HepG2 (cell line): ENCODE measurements at regions of chr16 and their contacts with region 1.

Region 1: GRCh38 chr16:48194828-48195556 is 39.2 kb upstream of the ABCC12 start:
- DNase-seq: peak; percentile 86
- ATAC-seq: peak; percentile 94
- H3K4me3 ChIP-seq: no peak overlapping the region
- H3K27ac ChIP-seq: no peak overlapping the region
- H3K4me1 ChIP-seq: peaks cover 24% of the 10 kb centered on the region
- H3K27me3 ChIP-seq: no peaks in the 10 kb centered on the region
- CTCF ChIP-seq: no peak
- EP300 ChIP-seq: 0 out of 4 replicates have a peak, but pooled peaks of 1 of the 2 experiments have one; percentile 8
- POLR2A ChIP-seq: no peak
- RAD21 ChIP-seq: no peak

Region 2: DNA sequence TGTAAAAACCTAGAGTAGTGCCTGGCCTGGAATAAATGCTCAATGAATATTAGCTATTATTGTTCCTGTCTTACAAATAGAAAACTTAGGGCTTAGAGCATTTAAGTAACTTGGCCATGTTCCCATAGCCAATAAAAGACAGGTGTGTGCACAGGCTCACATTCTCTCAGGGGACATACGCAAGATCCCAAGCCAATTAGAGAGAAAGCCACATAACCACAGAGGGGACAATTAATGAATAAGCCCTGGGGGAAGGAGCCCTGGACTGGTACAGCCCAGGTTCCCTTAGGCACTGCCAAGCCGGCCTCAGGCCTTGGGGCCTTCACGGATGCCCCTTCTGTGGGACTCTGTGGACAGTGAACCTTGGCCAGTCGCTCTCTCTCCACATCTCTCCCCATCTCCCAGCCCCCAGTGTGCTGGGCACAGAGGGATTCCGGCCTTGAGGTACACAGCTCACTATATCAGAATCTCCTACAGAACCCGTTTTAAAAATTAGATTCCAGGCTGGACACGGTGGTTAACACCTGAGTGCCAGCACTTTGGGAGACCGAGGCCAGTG is 11.9 kb before region 1 on chr16:
- CTCF ChIA-PET with region 1: no interaction called
- POLR2A ChIA-PET with region 1: no interaction called
- in situ Hi-C with region 1: no loop called
- intact Hi-C with region 1: loop called (anchors 2 kb)
- DNase-seq: no peak
- ATAC-seq: peak; percentile 49
- H3K4me3 ChIP-seq: no peak overlapping the region
- H3K27ac ChIP-seq: no peak overlapping the region
- H3K4me1 ChIP-seq: peaks cover 47% of the 10 kb centered on the region
- H3K27me3 ChIP-seq: no peaks in the 10 kb centered on the region
- CTCF ChIP-seq: no peak
- EP300 ChIP-seq: no peak
- POLR2A ChIP-seq: no peak
- RAD21 ChIP-seq: no peak

Region 3: DNA sequence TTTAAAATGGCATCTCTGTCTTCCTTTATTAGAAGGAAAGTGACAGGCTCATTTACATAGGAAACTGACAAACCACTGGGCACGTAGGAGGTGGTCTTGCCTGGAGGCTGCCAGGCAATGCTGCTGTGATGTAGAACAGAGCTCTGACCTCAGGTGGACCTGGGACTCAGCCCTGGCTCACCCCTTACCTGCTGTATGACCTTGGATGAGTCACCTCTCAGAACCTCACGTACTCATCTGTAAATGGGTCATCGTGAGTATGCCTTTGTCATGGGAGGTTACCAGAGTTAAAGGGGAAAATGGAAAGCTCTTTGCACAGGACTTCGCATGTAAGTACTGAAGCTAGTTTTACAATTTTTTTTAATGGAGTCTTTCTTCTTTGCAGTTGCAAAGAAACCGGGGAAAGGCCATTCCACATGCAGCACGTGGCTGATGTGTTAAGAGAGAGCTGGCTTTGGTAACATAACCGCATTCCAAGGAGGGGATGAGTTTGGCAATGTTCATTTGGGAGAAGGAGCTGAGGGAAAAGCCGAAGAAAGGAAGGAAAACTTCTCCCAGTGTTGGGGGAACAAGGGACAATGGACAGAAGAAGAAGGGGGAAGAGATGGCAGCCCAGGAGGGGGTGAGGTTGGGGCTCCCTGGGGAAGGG is 11.7 kb after region 1 on chr16:
- CTCF ChIA-PET with region 1: no interaction called
- POLR2A ChIA-PET with region 1: interaction called, 14 read pairs
- in situ Hi-C with region 1: no loop called
- intact Hi-C with region 1: no loop called
- DNase-seq: peak; percentile 69
- ATAC-seq: peak; percentile 2; the same call in 1 of the 3 replicates
- H3K4me3 ChIP-seq: no peak overlapping the region
- H3K27ac ChIP-seq: peak overlapping the region; percentile 89
- H3K4me1 ChIP-seq: peaks cover 67% of the 10 kb centered on the region
- H3K27me3 ChIP-seq: no peaks in the 10 kb centered on the region
- CTCF ChIP-seq: no peak
- EP300 ChIP-seq: peak in 1 of 2 experiments; percentile 59; a peak in 1 of 4 replicates
- POLR2A ChIP-seq: no peak
- RAD21 ChIP-seq: no peak

Region 4: GRCh38 chr16:48217708-48218107 is 22.7 kb after region 1 on chr16:
- CTCF ChIA-PET with region 1: no interaction called
- POLR2A ChIA-PET with region 1: no interaction called
- in situ Hi-C with region 1: no loop called
- intact Hi-C with region 1: no loop called
- DNase-seq: no peak
- ATAC-seq: no peak
- H3K4me3 ChIP-seq: no peak overlapping the region
- H3K27ac ChIP-seq: no peak overlapping the region
- H3K4me1 ChIP-seq: peaks cover 27% of the 10 kb centered on the region
- H3K27me3 ChIP-seq: no peaks in the 10 kb centered on the region
- CTCF ChIP-seq: no peak
- EP300 ChIP-seq: no peak
- POLR2A ChIP-seq: no peak
- RAD21 ChIP-seq: no peak